B cell (primary cell): ENCODE measurements at regions of chr6 and their contacts with region 1.

Region 1: GRCh38 chr6:149431905-149432775 is 32.1 kb downstream of the SUMO4 start:
- DNase-seq: peak; percentile 87
- ATAC-seq: peak; percentile 92
- H3K4me3 ChIP-seq: no peak overlapping the region
- H3K4me3 Mint-ChIP-seq: peak overlapping the region; percentile 49
- H3K27ac ChIP-seq: no peak overlapping the region
- H3K27ac Mint-ChIP-seq: no peak overlapping the region
- H3K4me1 ChIP-seq: peaks cover 0 to 7% of the 10 kb centered on the region in 2 donors
- H3K4me1 Mint-ChIP-seq: peaks cover 7% of the 10 kb centered on the region
- H3K27me3 ChIP-seq: no peaks in the 10 kb centered on the region
- H3K27me3 Mint-ChIP-seq: no peaks in the 10 kb centered on the region
- CTCF ChIP-seq: peak; percentile 96

Region 2: DNA sequence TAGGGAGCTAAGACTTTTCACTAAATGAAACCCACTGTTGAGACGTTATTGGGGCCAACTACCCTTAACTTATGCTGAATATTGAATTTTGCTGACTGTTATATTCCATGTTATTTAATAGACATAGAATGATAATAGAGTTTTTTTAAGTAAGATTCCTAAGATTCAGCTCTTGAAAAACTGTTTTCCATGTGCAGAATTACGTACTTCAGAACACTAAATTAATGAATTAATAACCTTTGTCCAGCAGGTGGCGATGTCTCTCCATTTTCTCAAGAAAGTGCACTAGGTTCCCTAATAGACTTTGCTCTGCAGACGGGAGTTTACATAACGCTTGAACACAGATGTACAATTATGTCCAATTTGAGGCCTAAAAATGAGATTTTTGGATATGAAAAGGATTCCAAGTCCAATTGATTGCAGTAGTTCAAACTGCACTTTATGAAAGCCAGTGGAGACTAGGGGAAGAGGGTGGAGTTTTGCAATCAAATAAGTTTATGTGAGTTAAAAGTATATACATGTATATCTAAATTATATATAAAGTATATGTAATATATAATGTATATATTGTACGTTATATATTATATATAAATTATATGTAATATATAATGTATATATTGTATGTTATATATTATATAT is 403.3 kb before region 1 on chr6:
- CTCF ChIA-PET with region 1: interaction called, 201 read pairs
- POLR2A ChIA-PET with region 1: no interaction called
- intact Hi-C with region 1: loop called (anchors 1 kb)
- DNase-seq: peak; percentile 88
- ATAC-seq: peak; percentile 53
- H3K4me3 ChIP-seq: no peak overlapping the region
- H3K4me3 Mint-ChIP-seq: no peak overlapping the region
- H3K27ac ChIP-seq: no peak overlapping the region
- H3K27ac Mint-ChIP-seq: no peak overlapping the region
- H3K4me1 ChIP-seq: peaks cover 3 to 19% of the 10 kb centered on the region in 2 donors
- H3K4me1 Mint-ChIP-seq: peaks cover 28% of the 10 kb centered on the region
- H3K27me3 ChIP-seq: no peaks in the 10 kb centered on the region
- H3K27me3 Mint-ChIP-seq: no peaks in the 10 kb centered on the region
- CTCF ChIP-seq: peak; percentile 92

Region 3: GRCh38 chr6:149043476-149044130 is 388.5 kb before region 1 on chr6:
- CTCF ChIA-PET with region 1: interaction called, 19 read pairs
- POLR2A ChIA-PET with region 1: no interaction called
- intact Hi-C with region 1: no loop called
- DNase-seq: no peak
- ATAC-seq: peak; percentile 33
- H3K4me3 ChIP-seq: no peak overlapping the region
- H3K4me3 Mint-ChIP-seq: no peak overlapping the region
- H3K27ac ChIP-seq: no peak overlapping the region
- H3K27ac Mint-ChIP-seq: no peak overlapping the region
- H3K4me1 ChIP-seq: peaks cover 22 to 32% of the 10 kb centered on the region in 2 donors
- H3K4me1 Mint-ChIP-seq: peaks cover 35% of the 10 kb centered on the region
- H3K27me3 ChIP-seq: no peaks in the 10 kb centered on the region
- H3K27me3 Mint-ChIP-seq: no peaks in the 10 kb centered on the region
- CTCF ChIP-seq: peak; percentile 37

Region 4: GRCh38 chr6:149075616-149076364 is 356.4 kb before region 1 on chr6:
- CTCF ChIA-PET with region 1: interaction called, 33 read pairs
- POLR2A ChIA-PET with region 1: no interaction called
- intact Hi-C with region 1: no loop called
- DNase-seq: no peak
- ATAC-seq: no peak
- H3K4me3 ChIP-seq: no peak overlapping the region
- H3K4me3 Mint-ChIP-seq: no peak overlapping the region
- H3K27ac ChIP-seq: no peak overlapping the region
- H3K27ac Mint-ChIP-seq: no peak overlapping the region
- H3K4me1 ChIP-seq: no peaks in the 10 kb centered on the region
- H3K4me1 Mint-ChIP-seq: peaks cover 7% of the 10 kb centered on the region
- H3K27me3 ChIP-seq: no peaks in the 10 kb centered on the region
- H3K27me3 Mint-ChIP-seq: no peaks in the 10 kb centered on the region
- CTCF ChIP-seq: no peak

Region 5: GRCh38 chr6:149094156-149094555 is 338.0 kb before region 1 on chr6:
- CTCF ChIA-PET with region 1: interaction called, 17 read pairs
- POLR2A ChIA-PET with region 1: no interaction called
- intact Hi-C with region 1: no loop called
- DNase-seq: no peak
- ATAC-seq: no peak
- H3K4me3 ChIP-seq: no peak overlapping the region
- H3K4me3 Mint-ChIP-seq: no peak overlapping the region
- H3K27ac ChIP-seq: no peak overlapping the region
- H3K27ac Mint-ChIP-seq: no peak overlapping the region
- H3K4me1 ChIP-seq: no peaks in the 10 kb centered on the region
- H3K4me1 Mint-ChIP-seq: peaks cover 2% of the 10 kb centered on the region
- H3K27me3 ChIP-seq: peaks cover 0 to 3% (median 0%) of the 10 kb centered on the region in 4 experiments
- H3K27me3 Mint-ChIP-seq: peaks cover 3% of the 10 kb centered on the region
- CTCF ChIP-seq: no peak

Region 6: GRCh38 chr6:149384464-149384863 is 47.7 kb before region 1 on chr6:
- CTCF ChIA-PET with region 1: interaction called, 13 read pairs
- POLR2A ChIA-PET with region 1: interaction called, 5 read pairs
- intact Hi-C with region 1: no loop called
- DNase-seq: no peak
- ATAC-seq: no peak
- H3K4me3 ChIP-seq: no peak overlapping the region
- H3K4me3 Mint-ChIP-seq: no peak overlapping the region
- H3K27ac ChIP-seq: no peak overlapping the region
- H3K27ac Mint-ChIP-seq: no peak overlapping the region
- H3K4me1 ChIP-seq: no peaks in the 10 kb centered on the region
- H3K4me1 Mint-ChIP-seq: peaks cover 15% of the 10 kb centered on the region
- H3K27me3 ChIP-seq: no peaks in the 10 kb centered on the region
- H3K27me3 Mint-ChIP-seq: no peaks in the 10 kb centered on the region
- CTCF ChIP-seq: no peak

Region 7: GRCh38 chr6:149484733-149485700 is 52.9 kb after region 1 on chr6 and contains the start of gene ZC3H12D:
- CTCF ChIA-PET with region 1: interaction called, 11 read pairs
- POLR2A ChIA-PET with region 1: no interaction called
- intact Hi-C with region 1: no loop called
- DNase-seq: peak; percentile 88
- ATAC-seq: peak; percentile 54
- H3K4me3 ChIP-seq: peak within 1 kb of the TSS; percentile 55 to 77 (median 71)
- H3K4me3 Mint-ChIP-seq: peak within 1 kb of the TSS; percentile 94
- H3K27ac ChIP-seq: peak within 1 kb of the TSS; percentile 94 to 98
- H3K27ac Mint-ChIP-seq: peak within 1 kb of the TSS; percentile 99
- H3K4me1 ChIP-seq: peaks cover 78 to 91% of the 10 kb centered on the region in 2 donors
- H3K4me1 Mint-ChIP-seq: peaks cover 77% of the 10 kb centered on the region
- H3K27me3 ChIP-seq: no peaks in the 10 kb centered on the region
- H3K27me3 Mint-ChIP-seq: no peaks in the 10 kb centered on the region
- CTCF ChIP-seq: peak; percentile 70
- total RNA-seq, gene ZC3H12D: 190 and 215 TPM in 2 replicates

Region 8: DNA sequence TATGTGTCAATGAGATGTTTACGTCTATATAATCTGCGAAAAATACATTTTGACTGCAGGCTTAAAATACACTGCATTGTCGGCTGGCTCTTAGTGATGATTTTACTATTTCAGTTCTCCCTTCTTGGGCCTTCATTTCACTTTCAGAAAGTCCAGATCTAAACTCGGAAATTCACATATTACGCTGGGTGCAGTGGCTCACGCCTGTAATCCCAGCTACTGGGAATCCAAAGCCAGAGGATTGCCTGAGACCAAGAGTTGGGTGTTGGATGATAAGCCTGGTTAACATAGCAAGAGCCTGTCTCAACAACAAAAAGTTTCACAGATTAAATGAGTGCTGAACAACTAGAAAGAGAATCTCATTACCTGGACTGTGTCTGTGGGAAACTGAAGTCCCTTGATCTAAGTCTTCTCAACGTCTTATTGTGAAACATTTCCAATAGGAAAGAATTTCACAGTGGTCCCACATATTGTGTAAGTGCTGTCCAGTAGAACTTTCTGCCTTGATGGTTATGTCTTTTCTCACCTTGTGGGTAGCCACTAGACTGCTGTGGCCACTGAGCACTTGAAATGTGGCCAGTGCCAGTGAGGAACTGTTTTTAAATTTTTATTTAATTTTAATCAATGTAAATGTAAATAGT is 135.9 kb after region 1 on chr6:
- CTCF ChIA-PET with region 1: no interaction called
- POLR2A ChIA-PET with region 1: no interaction called
- intact Hi-C with region 1: no loop called
- DNase-seq: peak; percentile 22
- ATAC-seq: no peak
- H3K4me3 ChIP-seq: peak overlapping the region in 1 of 5 experiments; percentile 8
- H3K4me3 Mint-ChIP-seq: peak overlapping the region; percentile 94
- H3K27ac ChIP-seq: peak overlapping the region in 1 of 2 donors; percentile 52
- H3K27ac Mint-ChIP-seq: peak overlapping the region; percentile 80
- H3K4me1 ChIP-seq: peaks cover 13 to 26% of the 10 kb centered on the region in 2 donors
- H3K4me1 Mint-ChIP-seq: peaks cover 25% of the 10 kb centered on the region
- H3K27me3 ChIP-seq: no peaks in the 10 kb centered on the region
- H3K27me3 Mint-ChIP-seq: no peaks in the 10 kb centered on the region
- CTCF ChIP-seq: no peak

Region 9: GRCh38 chr6:149746147-149746946 is 314.2 kb after region 1 on chr6 and contains the start of gene NUP43:
- CTCF ChIA-PET with region 1: no interaction called
- POLR2A ChIA-PET with region 1: no interaction called
- intact Hi-C with region 1: no loop called
- DNase-seq: peak; percentile 93
- ATAC-seq: peak; percentile 67
- H3K4me3 ChIP-seq: peak within 1 kb of the TSS; percentile 74 to 97 (median 80)
- H3K4me3 Mint-ChIP-seq: peak within 1 kb of the TSS; percentile 96
- H3K27ac ChIP-seq: peak within 1 kb of the TSS; percentile 63 to 65
- H3K27ac Mint-ChIP-seq: peak within 1 kb of the TSS; percentile 90
- H3K4me1 ChIP-seq: peaks cover 23 to 29% of the 10 kb centered on the region in 2 donors
- H3K4me1 Mint-ChIP-seq: peaks cover 28% of the 10 kb centered on the region
- H3K27me3 ChIP-seq: no peaks in the 10 kb centered on the region
- H3K27me3 Mint-ChIP-seq: no peaks in the 10 kb centered on the region
- CTCF ChIP-seq: peak; percentile 71
- total RNA-seq, gene NUP43: 75.7 and 77.7 TPM in 2 replicates

Region 10: DNA sequence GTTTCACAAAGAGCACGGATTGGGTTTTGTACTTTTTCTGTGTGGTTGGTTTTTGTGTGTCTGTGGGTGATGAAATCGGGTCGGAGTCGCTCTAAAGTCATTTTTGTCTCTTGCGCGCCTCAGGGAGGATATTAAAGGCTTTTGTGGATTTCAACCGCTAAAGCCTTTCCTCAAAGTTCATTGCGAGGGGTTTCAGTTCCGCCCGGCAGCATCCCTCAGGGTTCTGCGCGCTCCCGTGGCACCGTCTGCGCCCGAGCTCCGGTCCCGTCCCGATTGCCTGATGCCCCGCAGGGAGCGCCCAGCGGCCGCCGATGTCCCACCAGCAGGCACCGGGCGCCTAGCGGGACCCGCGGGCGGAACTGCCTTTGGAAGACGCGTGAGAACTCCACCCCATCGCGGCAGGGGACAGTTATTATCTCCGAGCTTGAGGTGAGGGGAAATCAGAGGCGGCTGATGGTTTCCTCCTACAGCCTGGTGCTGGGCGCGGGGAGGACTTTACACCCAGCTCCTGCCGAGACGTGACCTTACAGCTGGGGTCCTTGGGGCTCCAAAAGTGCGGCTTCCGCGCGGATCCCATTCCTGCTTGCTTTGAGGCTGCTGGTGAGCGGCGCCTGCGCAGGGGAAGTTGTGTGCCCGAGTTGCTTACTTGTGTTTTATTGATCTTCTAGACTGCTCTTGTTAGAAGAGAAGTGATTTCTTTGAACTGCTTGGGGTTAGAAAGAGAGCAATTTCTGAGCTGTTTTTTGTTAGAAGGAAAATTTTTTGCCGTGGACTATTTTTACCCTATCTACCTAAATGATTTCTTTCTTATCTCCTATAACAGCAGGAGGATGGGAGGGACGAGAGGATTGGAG is 558.7 kb after region 1 on chr6:
- CTCF ChIA-PET with region 1: no interaction called
- POLR2A ChIA-PET with region 1: no interaction called
- intact Hi-C with region 1: no loop called
- DNase-seq: peak; percentile 76
- ATAC-seq: peak; percentile 60
- H3K4me3 ChIP-seq: peak overlapping the region; percentile 6 to 68 (median 55)
- H3K4me3 Mint-ChIP-seq: peak overlapping the region; percentile 90
- H3K27ac ChIP-seq: no peak overlapping the region
- H3K27ac Mint-ChIP-seq: peak overlapping the region; percentile 46
- H3K4me1 ChIP-seq: peaks cover 29 to 38% of the 10 kb centered on the region in 2 donors
- H3K4me1 Mint-ChIP-seq: peaks cover 31% of the 10 kb centered on the region
- H3K27me3 ChIP-seq: peaks cover 0 to 84% (median 63%) of the 10 kb centered on the region in 4 experiments
- H3K27me3 Mint-ChIP-seq: peaks cover 73% of the 10 kb centered on the region
- CTCF ChIP-seq: no peak